Activated CD8-positive, alpha-beta T cell treated with anti-CD3 and anti-CD28 coated beads for 36 hours (primary cell): ENCODE measurements at regions of chr17 and their contacts with region 1.

Region 1: GRCh38 chr17:75405365-75406221 is at the start of gene GRB2:
- DNase-seq: peak; percentile 99
- ATAC-seq: peak; percentile 88
- H3K4me3 Mint-ChIP-seq: peak within 1 kb of the TSS; percentile 99
- H3K27ac Mint-ChIP-seq: peak within 1 kb of the TSS; percentile 99
- H3K4me1 Mint-ChIP-seq: peaks cover 34% of the 10 kb centered on the region
- H3K27me3 Mint-ChIP-seq: no peaks in the 10 kb centered on the region
- CTCF ChIP-seq: no peak
- total RNA-seq, gene GRB2: 167 to 179 TPM

Region 2: DNA sequence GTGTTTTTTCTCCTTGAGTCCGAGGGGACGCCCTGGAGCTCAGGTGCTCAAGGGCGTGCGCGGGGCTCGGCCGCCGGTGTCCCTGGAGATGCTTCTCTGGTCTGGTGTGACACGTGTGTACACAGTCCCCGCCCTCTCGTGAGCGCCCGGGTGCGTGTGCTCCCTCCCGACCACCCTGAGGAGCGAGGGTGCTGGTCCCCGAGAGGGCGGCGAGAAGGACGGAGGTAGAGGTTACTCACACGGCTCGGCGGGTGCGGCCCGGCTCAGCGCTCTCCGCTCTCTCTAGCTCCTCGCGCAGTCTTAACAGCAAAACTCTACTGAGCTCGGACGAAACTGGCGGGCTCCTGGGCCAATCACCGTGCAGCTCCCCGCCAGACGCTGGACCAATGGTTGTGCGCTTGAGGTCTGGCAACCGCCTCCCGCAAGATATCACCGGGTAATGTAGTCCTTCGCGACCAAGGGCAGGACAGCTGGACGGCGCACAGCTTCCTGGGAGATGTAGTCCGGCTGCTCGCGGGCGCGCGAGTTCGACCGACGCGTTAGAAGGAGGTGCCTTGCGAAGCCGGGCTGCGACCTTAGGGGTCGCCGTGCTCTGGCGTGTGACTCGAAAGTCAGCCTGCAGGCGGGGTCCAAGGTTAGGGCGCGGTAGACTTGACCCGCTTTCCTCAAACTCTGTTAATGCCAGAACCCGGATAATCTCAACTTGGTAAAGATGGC is 116.3 kb before region 1 on chr17 and contains the start of gene SLC25A19:
- CTCF ChIA-PET with region 1: interaction called, 8 read pairs
- POLR2A ChIA-PET with region 1: interaction called, 8 read pairs
- intact Hi-C with region 1: loop called (anchors 2 kb)
- DNase-seq: peak; percentile 99
- ATAC-seq: peak; percentile 93
- H3K4me3 Mint-ChIP-seq: peak within 1 kb of the TSS; percentile 89
- H3K27ac Mint-ChIP-seq: peak within 1 kb of the TSS; percentile 100
- H3K4me1 Mint-ChIP-seq: peaks cover 26% of the 10 kb centered on the region
- H3K27me3 Mint-ChIP-seq: no peaks in the 10 kb centered on the region
- CTCF ChIP-seq: no peak
- total RNA-seq, gene SLC25A19: 55.1 to 55.2 TPM

Region 3: GRCh38 chr17:75667021-75667790 is 261.6 kb after region 1 on chr17 and contains the starts of genes RECQL5 and SAP30BP:
- CTCF ChIA-PET with region 1: no interaction called
- POLR2A ChIA-PET with region 1: no interaction called
- intact Hi-C with region 1: no loop called
- DNase-seq: peak; percentile 99
- ATAC-seq: peak; percentile 100
- H3K4me3 Mint-ChIP-seq: no peak within 1 kb of the TSS
- H3K27ac Mint-ChIP-seq: peak within 1 kb of the TSS; percentile 63
- H3K4me1 Mint-ChIP-seq: peaks cover 37% of the 10 kb centered on the region
- H3K27me3 Mint-ChIP-seq: no peaks in the 10 kb centered on the region
- CTCF ChIP-seq: no peak
- total RNA-seq, gene RECQL5: 33.3 to 34.2 TPM
- total RNA-seq, gene SAP30BP: 73.0 to 75.8 TPM